HEK293 (cell line): ENCODE measurements at regions of chr14 and their contacts with region 1.

Region 1: GRCh38 chr14:71117839-71118743 is 210.8 kb downstream of the PCNX1 start:
- H3K4me3 ChIP-seq: no peak overlapping the region
- H3K27ac ChIP-seq: no peak overlapping the region
- H3K4me1 ChIP-seq: no peaks in the 10 kb centered on the region
- CTCF ChIP-seq: no peak

Region 2: DNA sequence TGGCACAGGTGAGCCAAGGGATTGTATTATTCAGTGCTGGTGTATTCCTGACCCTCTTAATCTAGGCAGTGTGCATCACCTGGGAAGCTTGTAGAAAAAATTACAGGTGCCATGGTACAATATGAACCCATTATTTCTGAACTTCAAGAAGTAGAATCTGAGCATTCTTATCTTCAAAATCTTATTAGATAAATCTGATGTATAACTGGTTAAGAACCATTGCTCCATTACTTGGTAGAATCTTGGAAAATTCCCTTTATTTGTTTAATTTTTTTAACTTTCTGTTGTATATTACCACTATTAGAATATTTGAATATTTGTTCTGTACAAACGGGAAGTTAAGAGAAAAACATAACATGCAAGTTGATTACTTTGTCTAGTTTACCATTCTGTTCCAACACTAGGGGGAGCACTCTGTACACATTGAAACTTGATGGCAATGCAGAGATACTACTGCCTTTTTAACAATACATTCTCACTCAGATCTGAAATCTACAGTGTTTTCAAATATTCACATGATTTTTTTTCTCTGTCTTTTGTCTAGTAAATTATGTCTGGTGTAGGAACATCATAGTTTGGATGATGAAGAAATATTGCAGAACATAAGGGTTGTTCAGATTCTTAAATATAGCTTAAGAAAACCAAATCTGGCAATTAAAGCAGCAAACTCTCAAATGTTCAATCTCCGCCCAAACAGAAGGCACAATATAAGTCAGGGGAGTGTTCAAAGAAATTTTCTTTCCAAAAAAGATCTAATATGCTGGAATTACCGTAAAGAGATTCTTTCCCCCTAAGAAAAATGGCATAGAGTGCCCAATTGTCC is 14.2 kb before region 1 on chr14:
- CTCF ChIA-PET with region 1: interaction called, 10 read pairs
- POLR2A ChIA-PET with region 1: no interaction called
- H3K4me3 ChIP-seq: no peak overlapping the region
- H3K27ac ChIP-seq: no peak overlapping the region
- H3K4me1 ChIP-seq: no peaks in the 10 kb centered on the region
- CTCF ChIP-seq: no peak

Region 3: DNA sequence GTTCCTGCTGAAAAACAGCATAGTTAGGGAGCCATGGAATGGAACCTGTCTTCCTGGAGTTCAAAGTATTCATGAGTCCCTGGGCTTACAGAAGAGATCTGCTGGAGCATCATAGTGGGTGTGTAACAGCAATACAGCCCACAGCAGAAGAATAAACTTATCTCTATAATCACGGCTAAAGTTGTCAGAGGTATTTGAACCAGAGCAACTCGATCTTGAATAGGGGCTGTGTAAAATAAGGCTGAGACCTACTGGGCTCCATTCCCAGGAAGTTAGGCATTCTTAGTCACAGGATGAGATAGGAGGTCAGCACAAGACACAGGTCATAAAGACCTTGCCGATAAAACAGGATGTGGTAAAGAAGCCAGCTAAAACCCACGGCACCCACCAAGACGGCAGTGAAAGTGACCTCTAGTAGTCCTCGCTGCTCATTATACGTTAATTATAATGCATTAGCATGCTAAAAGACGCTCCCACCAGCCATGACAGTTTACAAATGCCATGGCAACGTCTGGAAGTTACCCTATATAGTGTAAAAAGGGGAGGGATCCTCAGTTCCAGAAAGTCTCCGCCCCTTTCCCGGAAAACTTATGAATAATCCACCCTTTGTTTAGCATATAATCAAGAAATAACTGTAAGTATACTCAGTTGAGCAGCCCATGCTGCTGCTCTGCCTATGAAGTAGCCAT is 12.5 kb after region 1 on chr14:
- CTCF ChIA-PET with region 1: no interaction called
- POLR2A ChIA-PET with region 1: no interaction called
- H3K4me3 ChIP-seq: no peak overlapping the region
- H3K27ac ChIP-seq: no peak overlapping the region
- H3K4me1 ChIP-seq: no peaks in the 10 kb centered on the region
- CTCF ChIP-seq: no peak

Region 4: DNA sequence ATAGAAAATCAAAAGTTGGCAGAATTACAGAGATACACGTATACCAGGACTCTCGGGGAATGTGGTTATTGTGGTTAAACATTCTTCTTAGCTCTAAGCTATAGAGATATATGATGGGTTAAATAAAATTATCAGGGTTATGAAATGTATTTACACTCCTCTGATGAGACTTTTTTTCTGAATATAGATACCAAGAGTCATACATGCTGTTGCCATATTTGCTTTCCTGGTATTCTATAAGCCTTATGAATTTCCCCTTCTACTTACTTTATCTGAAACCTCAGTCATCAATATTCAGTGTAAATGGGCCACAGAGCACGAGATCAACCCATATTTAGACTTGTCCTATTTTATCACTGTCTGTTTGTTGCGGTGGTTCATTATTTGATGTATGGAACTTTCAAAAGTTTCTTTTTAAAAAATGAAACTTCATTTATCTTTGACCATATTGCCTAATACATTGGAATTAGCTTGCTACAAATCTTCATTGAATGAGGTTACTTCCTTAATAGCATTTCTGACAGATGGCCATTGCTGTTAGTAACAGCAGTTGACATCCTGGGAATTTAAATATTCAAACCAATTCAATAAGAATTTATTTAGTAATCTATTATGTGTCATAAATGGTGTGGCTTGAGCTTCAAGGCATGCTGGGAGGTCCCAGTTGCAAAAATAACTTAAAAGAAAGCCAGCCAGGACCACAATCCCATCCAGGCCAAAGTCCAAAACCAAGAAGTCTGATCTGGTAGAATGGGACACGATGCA is 182.7 kb after region 1 on chr14:
- CTCF ChIA-PET with region 1: no interaction called
- POLR2A ChIA-PET with region 1: no interaction called
- H3K4me3 ChIP-seq: no peak overlapping the region
- H3K27ac ChIP-seq: no peak overlapping the region
- H3K4me1 ChIP-seq: no peaks in the 10 kb centered on the region
- CTCF ChIP-seq: no peak